GM12878 (cell line): ENCODE measurements at regions of chr1 and their contacts with region 1.

Region 1: GRCh38 chr1:33055210-33056008 is 18.7 kb upstream of the AK2 start:
- DNase-seq: peak; percentile 15
- ATAC-seq: peak; percentile 91
- H3K4me3 ChIP-seq: no peak overlapping the region
- H3K27ac ChIP-seq: no peak overlapping the region
- H3K4me1 ChIP-seq: peaks cover 9% of the 10 kb centered on the region
- H3K27me3 ChIP-seq: no peaks in the 10 kb centered on the region
- CTCF ChIP-seq: peak; percentile 67 to 74 (median 74)
- EP300 ChIP-seq: no peak
- POLR2A ChIP-seq: no peak
- RAD21 ChIP-seq: peak; percentile 64

Region 2: DNA sequence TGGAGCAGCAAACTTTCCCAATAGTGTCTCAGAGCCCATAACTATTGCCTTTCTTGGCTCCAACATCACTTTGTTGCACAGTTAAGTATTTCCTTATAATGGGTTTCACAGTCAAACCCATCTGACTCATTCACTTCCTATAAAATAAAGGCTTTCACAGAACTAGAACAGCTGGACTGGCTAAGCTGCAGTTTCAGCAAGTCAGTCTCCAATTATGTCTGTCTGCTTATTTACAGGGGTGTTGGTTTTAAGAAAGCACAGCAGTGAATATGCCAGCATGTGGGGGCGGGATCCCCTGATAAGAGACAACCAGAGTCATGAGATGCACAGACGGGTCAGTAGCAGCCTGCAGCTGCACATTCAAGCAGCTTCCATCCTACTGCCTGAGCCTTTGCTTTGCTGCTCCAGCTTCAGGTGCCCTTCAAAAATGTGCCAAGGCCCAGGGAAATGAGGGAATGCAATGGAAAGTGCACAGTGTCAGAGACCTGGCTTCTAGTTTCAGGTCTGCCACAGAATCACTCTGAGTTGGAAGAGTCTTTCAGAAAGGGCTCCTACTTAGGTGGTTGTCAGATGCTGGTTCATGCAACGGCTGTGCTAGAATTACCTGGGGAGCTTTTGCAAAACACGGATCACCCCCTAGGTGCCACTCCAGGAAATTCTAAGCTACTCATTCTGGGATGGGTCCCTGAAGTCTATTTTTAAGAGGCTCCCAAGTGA is 115.6 kb before region 1 on chr1:
- CTCF ChIA-PET with region 1: interaction called, 183 read pairs
- POLR2A ChIA-PET with region 1: interaction called, 3 read pairs
- RAD21 ChIA-PET with region 1: interaction called, 67 read pairs
- SMC1A ChIA-PET with region 1: interaction called, 110 read pairs
- in situ Hi-C with region 1: no loop called
- intact Hi-C with region 1: no loop called
- DNase-seq: no peak
- ATAC-seq: no peak
- H3K4me3 ChIP-seq: no peak overlapping the region
- H3K27ac ChIP-seq: no peak overlapping the region
- H3K4me1 ChIP-seq: no peaks in the 10 kb centered on the region
- H3K27me3 ChIP-seq: no peaks in the 10 kb centered on the region
- CTCF ChIP-seq: no peak
- EP300 ChIP-seq: no peak
- POLR2A ChIP-seq: no peak
- RAD21 ChIP-seq: no peak

Region 3: DNA sequence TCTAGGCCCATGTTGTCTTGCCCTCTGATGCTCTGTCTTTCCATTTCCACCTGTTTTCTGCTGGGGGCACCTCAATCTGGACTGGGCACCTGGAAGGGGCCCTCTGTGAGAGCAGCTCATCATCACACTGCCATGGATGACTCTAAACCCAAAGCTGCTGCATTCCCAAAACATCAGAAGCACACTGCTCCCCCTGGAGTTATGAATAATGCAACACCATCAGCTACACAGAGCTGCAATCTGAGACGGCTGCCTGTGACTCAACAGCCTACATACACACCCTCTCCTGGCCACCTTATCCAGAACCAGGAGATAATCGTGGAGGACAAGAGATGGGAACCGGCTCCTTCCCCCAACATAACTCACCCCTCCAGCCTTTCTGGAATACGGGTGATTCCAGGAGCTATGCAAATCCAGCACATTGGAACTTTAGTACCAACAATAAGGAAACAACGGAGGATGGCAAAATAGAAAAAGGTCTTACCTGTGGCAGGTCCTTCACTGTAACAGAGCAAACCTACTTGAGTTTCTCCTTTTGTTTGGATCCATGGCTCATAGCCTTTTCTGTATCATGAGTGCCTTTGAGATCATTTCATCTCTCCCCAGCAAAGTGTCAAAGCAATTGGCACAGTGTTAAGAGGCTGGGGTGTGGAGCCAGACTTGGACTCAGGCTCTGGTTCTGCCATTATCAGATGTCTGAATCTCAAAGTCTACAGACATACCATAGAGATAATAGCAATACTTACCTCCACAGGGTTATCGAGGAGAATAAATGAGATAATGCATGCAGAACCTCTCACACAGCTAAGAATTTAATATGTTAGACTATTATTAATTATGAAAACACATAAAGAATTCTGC is 48.0 kb before region 1 on chr1:
- CTCF ChIA-PET with region 1: interaction called, 5 read pairs
- POLR2A ChIA-PET with region 1: no interaction called
- RAD21 ChIA-PET with region 1: no interaction called
- SMC1A ChIA-PET with region 1: interaction called, 14 read pairs
- in situ Hi-C with region 1: no loop called
- intact Hi-C with region 1: no loop called
- DNase-seq: no peak
- ATAC-seq: peak; percentile 76
- H3K4me3 ChIP-seq: no peak overlapping the region
- H3K27ac ChIP-seq: no peak overlapping the region
- H3K4me1 ChIP-seq: peaks cover 5% of the 10 kb centered on the region; the same call in 1 of the 2 replicates
- H3K27me3 ChIP-seq: no peaks in the 10 kb centered on the region
- CTCF ChIP-seq: peak; percentile 17 to 36 (median 18); a peak in 3 of 6 replicates
- EP300 ChIP-seq: no peak
- POLR2A ChIP-seq: no peak; the same call in 1 of the 2 replicates
- RAD21 ChIP-seq: peak; percentile 57

Region 4: DNA sequence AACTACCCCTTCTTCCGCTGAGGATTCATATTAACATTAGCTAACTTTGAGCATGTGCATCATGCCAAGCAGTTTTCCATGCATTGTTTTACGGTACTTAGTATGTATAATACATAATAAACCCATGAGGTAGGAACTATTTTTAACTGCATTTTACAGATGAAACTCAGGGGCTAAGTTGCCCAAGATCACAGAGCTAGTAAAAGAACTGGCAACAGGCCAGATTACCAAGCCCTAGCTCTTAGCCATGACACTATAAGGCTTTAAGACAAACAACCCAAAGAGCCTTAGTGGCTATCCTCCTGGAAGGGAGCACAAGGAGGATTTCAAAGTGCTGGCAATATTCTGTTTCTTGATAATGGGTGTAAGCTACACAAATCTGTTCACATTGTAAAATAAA is 24.8 kb before region 1 on chr1:
- CTCF ChIA-PET with region 1: interaction called, 10 read pairs
- POLR2A ChIA-PET with region 1: interaction called, 4 read pairs
- RAD21 ChIA-PET with region 1: interaction called, 10 read pairs
- SMC1A ChIA-PET with region 1: interaction called, 9 read pairs
- in situ Hi-C with region 1: no loop called
- intact Hi-C with region 1: no loop called
- DNase-seq: no peak
- ATAC-seq: no peak
- H3K4me3 ChIP-seq: no peak overlapping the region
- H3K27ac ChIP-seq: no peak overlapping the region
- H3K4me1 ChIP-seq: peaks cover 20% of the 10 kb centered on the region
- H3K27me3 ChIP-seq: no peaks in the 10 kb centered on the region
- CTCF ChIP-seq: no peak
- EP300 ChIP-seq: no peak
- POLR2A ChIP-seq: no peak
- RAD21 ChIP-seq: no peak

Region 5: GRCh38 chr1:33169290-33170055 is 114.1 kb after region 1 on chr1:
- CTCF ChIA-PET with region 1: no interaction called
- POLR2A ChIA-PET with region 1: no interaction called
- RAD21 ChIA-PET with region 1: no interaction called
- SMC1A ChIA-PET with region 1: no interaction called
- in situ Hi-C with region 1: no loop called
- intact Hi-C with region 1: no loop called
- DNase-seq: no peak
- ATAC-seq: no peak
- H3K4me3 ChIP-seq: no peak overlapping the region
- H3K27ac ChIP-seq: no peak overlapping the region
- H3K4me1 ChIP-seq: no peaks in the 10 kb centered on the region
- H3K27me3 ChIP-seq: no peaks in the 10 kb centered on the region
- CTCF ChIP-seq: no peak
- EP300 ChIP-seq: no peak
- POLR2A ChIP-seq: no peak
- RAD21 ChIP-seq: no peak